ENCODE measurements at regions of chr6 and their contacts with region 1.

Region 1: GRCh38 chr6:57130661-57131177 is 40.7 kb downstream of the ZNF451 start:
- DNase-seq: no peak
- H3K4me3 Mint-ChIP-seq: no peak overlapping the region
- H3K27ac Mint-ChIP-seq: no peak overlapping the region
- H3K4me1 Mint-ChIP-seq: peaks cover 11% of the 10 kb centered on the region
- H3K27me3 Mint-ChIP-seq: no peaks in the 10 kb centered on the region

Region 2: GRCh38 chr6:57063847-57064246 is 66.9 kb before region 1 on chr6:
- intact Hi-C with region 1: no loop called
- DNase-seq: no peak
- H3K4me3 Mint-ChIP-seq: no peak overlapping the region
- H3K27ac Mint-ChIP-seq: no peak overlapping the region
- H3K4me1 Mint-ChIP-seq: peaks cover 5% of the 10 kb centered on the region
- H3K27me3 Mint-ChIP-seq: no peaks in the 10 kb centered on the region

Region 3: DNA sequence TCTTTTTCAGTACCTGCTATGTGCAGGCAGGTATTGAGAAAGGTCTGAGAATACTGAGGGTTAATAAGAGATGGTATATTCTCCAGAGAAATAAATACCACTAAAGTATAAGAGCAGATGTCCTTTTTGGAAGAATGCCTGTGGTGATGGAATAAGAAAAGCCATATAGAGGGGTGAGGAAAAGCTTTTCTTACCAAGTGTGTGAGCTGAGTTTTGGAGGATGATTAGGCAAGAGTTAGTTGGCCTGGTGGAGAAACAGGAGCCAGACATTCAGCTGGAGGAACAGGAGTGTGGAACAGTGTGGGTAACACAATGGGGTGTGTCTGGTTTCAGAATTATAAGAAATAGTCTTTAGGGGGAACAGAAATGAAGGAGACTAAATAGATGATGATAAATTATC is 20.8 kb before region 1 on chr6:
- intact Hi-C with region 1: loop called (anchors 2 kb)
- DNase-seq: no peak
- H3K4me3 Mint-ChIP-seq: no peak overlapping the region
- H3K27ac Mint-ChIP-seq: no peak overlapping the region
- H3K4me1 Mint-ChIP-seq: peaks cover 35% of the 10 kb centered on the region
- H3K27me3 Mint-ChIP-seq: no peaks in the 10 kb centered on the region

Region 4: GRCh38 chr6:57267586-57268293 is 137.0 kb after region 1 on chr6:
- intact Hi-C with region 1: no loop called
- DNase-seq: no peak
- H3K4me3 Mint-ChIP-seq: no peak overlapping the region
- H3K27ac Mint-ChIP-seq: no peak overlapping the region
- H3K4me1 Mint-ChIP-seq: peaks cover 8% of the 10 kb centered on the region
- H3K27me3 Mint-ChIP-seq: peaks cover 2% of the 10 kb centered on the region

Measured in activated T-helper 1 cell treated with anti-CD3 and anti-CD28 coated beads, Interleukin-12 subunit alpha, Interleukin-12 subunit beta, Interleukin-2, Interleukin-4 antibody, amounts not matched to agents 30 ng/mL and 10 ng/mL and 1 ng/mL, durations not matched to agents 14 hours and 24 hours and 36 hours (primary cell).